H1 (cell line): ENCODE measurements at regions of chr10 and their contacts with region 1.

Region 1: GRCh38 chr10:21336476-21337170 is 188.9 kb downstream of the SKIDA1 start:
- DNase-seq: peak; percentile 56 to 62
- H3K4me3 ChIP-seq: no peak overlapping the region; a peak in 1 of 8 replicates
- H3K27ac ChIP-seq: peak overlapping the region; percentile 61
- H3K4me1 ChIP-seq: peaks cover 5 to 11% (median 8%) of the 10 kb centered on the region in 4 experiments
- H3K27me3 ChIP-seq: no peaks in the 10 kb centered on the region
- CTCF ChIP-seq: peak; percentile 20 to 35 (median 29); a peak in 3 of 4 replicates
- EP300 ChIP-seq: no peak
- POLR2A ChIP-seq: no peak
- RAD21 ChIP-seq: peak; percentile 35 to 55; a peak in 3 of 4 replicates

Region 2: GRCh38 chr10:21421016-21421415 is 84.4 kb after region 1 on chr10:
- CTCF ChIA-PET with region 1: interaction called, 11 read pairs
- POLR2A ChIA-PET with region 1: no interaction called
- DNase-seq: no peak
- H3K4me3 ChIP-seq: no peak overlapping the region
- H3K27ac ChIP-seq: no peak overlapping the region
- H3K4me1 ChIP-seq: peaks cover 0 to 11% (median 2%) of the 10 kb centered on the region in 4 experiments; a peak in 3 of 7 replicates
- H3K27me3 ChIP-seq: no peaks in the 10 kb centered on the region
- CTCF ChIP-seq: no peak
- EP300 ChIP-seq: no peak
- POLR2A ChIP-seq: no peak
- RAD21 ChIP-seq: no peak